ENCODE measurements at regions of chr12 and their contacts with region 1.

Region 1: GRCh38 chr12:76586764-76587395 is 27.3 kb upstream of the OSBPL8 start:
- DNase-seq: peak; percentile 79
- H3K4me3 Mint-ChIP-seq: no peak overlapping the region
- H3K27ac Mint-ChIP-seq: peak overlapping the region; percentile 18
- H3K4me1 Mint-ChIP-seq: peaks cover 11% of the 10 kb centered on the region
- H3K27me3 Mint-ChIP-seq: no peaks in the 10 kb centered on the region

Region 2: GRCh38 chr12:76455582-76456345 is 131.1 kb before region 1 on chr12:
- intact Hi-C with region 1: loop called (anchors 10 kb)
- DNase-seq: peak; percentile 73
- H3K4me3 Mint-ChIP-seq: no peak overlapping the region
- H3K27ac Mint-ChIP-seq: no peak overlapping the region
- H3K4me1 Mint-ChIP-seq: peaks cover 14% of the 10 kb centered on the region
- H3K27me3 Mint-ChIP-seq: no peaks in the 10 kb centered on the region